H1 (cell line): ENCODE measurements at regions of chr5 and their contacts with region 1.

Region 1: GRCh38 chr5:135729321-135729786 is 105.1 kb upstream of the SLC25A48 start:
- DNase-seq: no peak
- H3K4me3 ChIP-seq: no peak overlapping the region
- H3K27ac ChIP-seq: no peak overlapping the region
- H3K4me1 ChIP-seq: no peaks in the 10 kb centered on the region; a peak in 1 of 7 replicates
- H3K27me3 ChIP-seq: no peaks in the 10 kb centered on the region
- CTCF ChIP-seq: peak in 2 of 3 experiments; percentile 24 to 49; a peak in 2 of 4 replicates
- EP300 ChIP-seq: no peak
- POLR2A ChIP-seq: no peak
- RAD21 ChIP-seq: peak; percentile 69 to 75

Region 2: GRCh38 chr5:135560858-135561257 is 168.5 kb before region 1 on chr5:
- CTCF ChIA-PET with region 1: interaction called, 218 read pairs
- POLR2A ChIA-PET with region 1: interaction called, 3 read pairs
- DNase-seq: peak in 1 of 2 experiments; percentile 92
- H3K4me3 ChIP-seq: 0 out of 8 replicates have a peak overlapping the region, but pooled peaks of 1 of the 4 experiments have one; percentile 15
- H3K27ac ChIP-seq: no peak overlapping the region
- H3K4me1 ChIP-seq: peaks cover 0 to 21% (median 8%) of the 10 kb centered on the region in 4 experiments; a peak in 6 of 7 replicates
- H3K27me3 ChIP-seq: no peaks in the 10 kb centered on the region; a peak in 1 of 7 replicates
- CTCF ChIP-seq: peak; percentile 91 to 92 (median 91)
- EP300 ChIP-seq: no peak
- POLR2A ChIP-seq: no peak
- RAD21 ChIP-seq: peak; percentile 95 to 96

Region 3: DNA sequence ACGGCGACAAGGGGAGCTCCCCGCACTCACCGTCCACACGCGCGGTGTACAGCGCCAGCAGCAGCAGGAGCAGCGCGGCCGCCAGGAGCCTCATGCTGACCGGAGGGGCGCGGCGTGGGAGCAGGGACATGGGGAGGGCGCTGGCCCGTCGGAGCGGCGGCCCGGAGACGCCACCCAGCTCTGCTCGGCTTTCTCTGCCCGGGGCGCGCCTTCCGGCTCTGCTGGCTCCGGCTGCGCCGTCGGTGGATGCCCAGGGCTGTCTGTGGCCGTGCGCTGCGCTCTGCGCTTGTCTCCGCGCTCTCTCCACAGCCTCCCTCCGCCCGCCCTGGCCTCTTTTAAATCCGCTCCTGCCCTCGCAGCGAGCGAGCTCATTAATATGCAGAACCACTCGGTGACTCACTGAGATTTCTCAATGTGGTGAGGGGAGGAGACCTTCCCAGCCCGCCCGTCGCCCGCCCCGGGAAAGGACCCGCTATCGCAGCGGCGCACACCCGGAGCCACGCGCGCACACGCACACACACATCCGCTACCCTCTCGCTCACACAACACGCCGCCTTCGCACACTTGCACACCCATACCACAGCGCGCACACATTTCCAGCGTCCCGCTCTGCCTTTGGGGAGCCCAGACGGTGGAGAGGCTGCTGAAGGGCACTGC is 150.5 kb before region 1 on chr5 and contains the start of gene CXCL14:
- CTCF ChIA-PET with region 1: interaction called, 10 read pairs
- POLR2A ChIA-PET with region 1: no interaction called
- DNase-seq: peak in 1 of 2 experiments; percentile 68
- H3K4me3 ChIP-seq: peak within 1 kb of the TSS; percentile 24 to 61 (median 58)
- H3K27ac ChIP-seq: no peak within 1 kb of the TSS
- H3K4me1 ChIP-seq: peaks cover 10 to 22% (median 19%) of the 10 kb centered on the region in 4 experiments
- H3K27me3 ChIP-seq: peaks cover 11 to 46% (median 41%) of the 10 kb centered on the region in 4 experiments
- CTCF ChIP-seq: no peak
- EP300 ChIP-seq: no peak
- POLR2A ChIP-seq: no peak
- RAD21 ChIP-seq: no peak
- total RNA-seq, gene CXCL14: 1.8 and 2.4 TPM in 2 replicates

Region 4: GRCh38 chr5:135651150-135651549 is 78.2 kb before region 1 on chr5:
- CTCF ChIA-PET with region 1: no interaction called
- POLR2A ChIA-PET with region 1: no interaction called
- DNase-seq: peak in 1 of 2 experiments; percentile 22
- H3K4me3 ChIP-seq: no peak overlapping the region
- H3K27ac ChIP-seq: no peak overlapping the region
- H3K4me1 ChIP-seq: no peaks in the 10 kb centered on the region
- H3K27me3 ChIP-seq: no peaks in the 10 kb centered on the region; a peak in 1 of 7 replicates
- CTCF ChIP-seq: no peak
- EP300 ChIP-seq: no peak
- POLR2A ChIP-seq: no peak
- RAD21 ChIP-seq: no peak

Region 5: GRCh38 chr5:135739383-135739981 is 10.1 kb after region 1 on chr5:
- CTCF ChIA-PET with region 1: interaction called, 13 read pairs
- POLR2A ChIA-PET with region 1: no interaction called
- DNase-seq: peak in 1 of 2 experiments; percentile 17
- H3K4me3 ChIP-seq: no peak overlapping the region
- H3K27ac ChIP-seq: no peak overlapping the region
- H3K4me1 ChIP-seq: no peaks in the 10 kb centered on the region
- H3K27me3 ChIP-seq: no peaks in the 10 kb centered on the region
- CTCF ChIP-seq: no peak
- EP300 ChIP-seq: no peak
- POLR2A ChIP-seq: no peak
- RAD21 ChIP-seq: no peak

Region 6: GRCh38 chr5:135761746-135762145 is 32.4 kb after region 1 on chr5:
- CTCF ChIA-PET with region 1: no interaction called
- POLR2A ChIA-PET with region 1: no interaction called
- DNase-seq: no peak
- H3K4me3 ChIP-seq: no peak overlapping the region
- H3K27ac ChIP-seq: no peak overlapping the region
- H3K4me1 ChIP-seq: no peaks in the 10 kb centered on the region
- H3K27me3 ChIP-seq: peaks cover 0 to 2% (median 0%) of the 10 kb centered on the region in 4 experiments; a peak in 1 of 7 replicates
- CTCF ChIP-seq: no peak
- EP300 ChIP-seq: no peak
- POLR2A ChIP-seq: no peak
- RAD21 ChIP-seq: no peak

Region 7: DNA sequence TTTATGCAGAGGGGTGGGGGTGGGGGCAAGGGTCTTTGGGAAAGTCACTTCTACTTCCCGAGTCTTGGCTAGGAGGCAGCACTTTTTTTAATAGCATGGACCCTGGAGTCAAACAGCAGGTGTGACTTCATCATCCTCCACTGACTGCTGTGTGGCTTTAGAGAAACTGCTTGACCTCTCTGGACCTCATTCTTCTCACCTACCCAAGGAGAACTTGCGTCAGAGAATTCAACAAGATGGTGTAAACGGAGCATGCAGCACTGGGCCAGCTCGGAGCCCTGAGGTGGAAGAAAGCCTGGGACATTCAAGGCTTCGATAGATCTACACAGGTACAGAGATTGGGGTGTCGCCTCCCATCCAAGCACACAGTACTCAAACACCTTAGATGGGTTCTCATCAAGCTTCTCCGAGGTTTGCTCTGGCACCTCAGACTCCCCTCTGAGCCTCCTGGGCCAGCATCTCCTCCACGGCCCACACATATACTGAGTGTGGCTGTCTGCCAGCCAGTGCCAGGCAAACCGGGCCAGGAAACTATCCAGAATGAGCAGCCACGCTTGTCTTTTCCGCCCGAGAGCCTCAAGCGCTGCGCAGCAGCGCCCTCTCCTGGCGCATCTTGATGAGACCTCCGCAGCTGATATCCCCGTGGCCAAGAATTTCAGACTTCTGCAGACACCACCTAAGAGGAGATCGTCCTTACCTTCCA is 100.5 kb after region 1 on chr5:
- CTCF ChIA-PET with region 1: interaction called, 23 read pairs
- POLR2A ChIA-PET with region 1: no interaction called
- DNase-seq: peak; percentile 36 to 86
- H3K4me3 ChIP-seq: no peak overlapping the region
- H3K27ac ChIP-seq: no peak overlapping the region
- H3K4me1 ChIP-seq: peaks cover 0 to 4% (median 1%) of the 10 kb centered on the region in 4 experiments; a peak in 2 of 7 replicates
- H3K27me3 ChIP-seq: peaks cover 8 to 32% (median 23%) of the 10 kb centered on the region in 4 experiments
- CTCF ChIP-seq: peak in 2 of 3 experiments; percentile 81 to 93; a peak in 3 of 4 replicates
- EP300 ChIP-seq: no peak
- POLR2A ChIP-seq: no peak
- RAD21 ChIP-seq: peak; percentile 88 to 97